Aorta (tissue), 5 donors: ENCODE measurements at regions of chr22 and their contacts with region 1.

Region 1: GRCh38 chr22:41517172-41518047 is 26.9 kb downstream of the POLR3H start:
- DNase-seq: peak in 1 of 2 donors; percentile 89
- ATAC-seq: peak; percentile 78
- H3K4me3 ChIP-seq: no peak overlapping the region
- H3K27ac ChIP-seq: no peak overlapping the region
- H3K4me1 ChIP-seq: no peaks in the 10 kb centered on the region
- H3K27me3 ChIP-seq: no peaks in the 10 kb centered on the region

Region 2: DNA sequence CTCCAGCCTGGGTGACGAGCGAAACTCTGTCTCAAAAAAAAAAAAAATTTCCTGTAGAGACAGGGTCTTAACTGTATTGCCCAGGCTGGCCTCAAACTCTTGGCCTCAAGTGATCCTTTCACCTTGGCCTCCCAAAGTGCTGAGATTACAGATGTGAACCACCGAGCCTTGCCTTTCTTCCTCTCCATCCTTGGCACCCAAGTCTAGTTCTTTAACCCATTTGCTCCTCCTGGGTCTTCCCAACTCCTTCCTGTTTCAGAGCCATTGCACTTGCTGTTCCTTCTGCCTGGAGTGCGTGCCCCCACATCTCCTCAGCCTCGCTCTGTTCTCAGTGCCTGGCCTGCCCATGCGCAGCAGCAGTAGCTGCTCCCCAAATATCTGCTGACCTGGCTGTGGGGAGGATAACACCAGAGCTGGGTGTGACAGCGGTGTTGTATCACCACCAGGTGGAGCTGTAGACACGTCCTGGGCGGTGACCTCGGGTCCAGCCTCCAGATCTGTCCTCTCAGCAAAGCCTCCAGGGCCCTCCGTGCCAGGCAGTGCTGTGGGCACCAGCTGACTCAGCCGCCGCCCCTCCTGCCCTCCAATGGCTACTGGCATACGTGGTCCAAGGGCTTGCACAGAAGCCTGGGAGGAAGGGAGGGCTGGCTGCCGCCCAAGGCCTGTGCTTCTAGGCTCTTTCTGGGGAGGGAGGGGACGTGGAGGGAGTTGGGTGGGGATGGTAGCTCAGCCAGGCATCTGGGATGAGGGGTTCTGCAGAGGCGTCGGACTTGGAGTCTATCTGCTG is 113.7 kb before region 1 on chr22:
- intact Hi-C with region 1: loop called (anchors 1 to 2 kb)
- DNase-seq: peak; percentile 97
- ATAC-seq: peak; percentile 96
- H3K4me3 ChIP-seq: no peak overlapping the region
- H3K27ac ChIP-seq: peak overlapping the region in 1 of 2 donors; percentile 30
- H3K4me1 ChIP-seq: no peaks in the 10 kb centered on the region
- H3K27me3 ChIP-seq: no peaks in the 10 kb centered on the region

Region 3: DNA sequence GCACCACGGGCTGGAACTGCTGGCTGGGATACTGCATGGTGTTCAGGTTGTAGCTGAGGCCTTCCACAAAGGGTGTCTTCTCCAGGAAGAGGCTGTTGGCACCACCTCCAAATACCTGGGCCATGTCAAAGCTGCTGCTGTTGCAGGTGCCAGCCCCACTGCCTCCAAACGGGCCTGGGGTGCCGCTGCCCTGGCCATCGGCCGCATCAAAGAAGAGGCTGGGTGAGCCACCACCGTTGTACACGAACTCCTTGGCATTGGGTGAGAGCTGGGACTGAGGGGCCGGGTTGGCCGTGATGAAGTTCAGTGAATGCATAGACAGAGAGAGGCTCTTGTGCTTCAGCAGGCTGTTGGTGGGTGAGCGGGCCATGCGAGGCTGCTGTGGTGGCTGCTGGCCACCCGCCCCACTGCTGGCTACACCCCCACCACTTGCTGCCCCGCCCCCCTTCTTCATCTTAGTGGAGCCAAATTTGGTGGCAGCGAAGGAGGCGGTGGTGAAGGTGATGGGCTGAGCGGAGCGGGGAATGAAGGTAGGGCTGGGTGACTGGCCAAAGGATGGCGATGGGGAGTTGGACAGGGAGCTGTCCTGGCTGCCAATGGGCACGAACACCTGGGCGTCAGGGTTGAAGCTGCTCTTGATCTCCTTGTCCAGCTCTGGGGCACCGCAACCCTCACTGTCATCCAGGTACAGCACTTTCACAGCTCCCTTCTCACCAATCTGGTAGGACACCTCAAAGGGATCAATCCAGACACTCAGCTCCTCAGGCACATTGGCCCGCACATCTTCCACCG is 80.9 kb before region 1 on chr22:
- intact Hi-C with region 1: no loop called
- DNase-seq: no peak
- ATAC-seq: no peak
- H3K4me3 ChIP-seq: no peak overlapping the region
- H3K27ac ChIP-seq: no peak overlapping the region
- H3K4me1 ChIP-seq: no peaks in the 10 kb centered on the region
- H3K27me3 ChIP-seq: no peaks in the 10 kb centered on the region

Region 4: DNA sequence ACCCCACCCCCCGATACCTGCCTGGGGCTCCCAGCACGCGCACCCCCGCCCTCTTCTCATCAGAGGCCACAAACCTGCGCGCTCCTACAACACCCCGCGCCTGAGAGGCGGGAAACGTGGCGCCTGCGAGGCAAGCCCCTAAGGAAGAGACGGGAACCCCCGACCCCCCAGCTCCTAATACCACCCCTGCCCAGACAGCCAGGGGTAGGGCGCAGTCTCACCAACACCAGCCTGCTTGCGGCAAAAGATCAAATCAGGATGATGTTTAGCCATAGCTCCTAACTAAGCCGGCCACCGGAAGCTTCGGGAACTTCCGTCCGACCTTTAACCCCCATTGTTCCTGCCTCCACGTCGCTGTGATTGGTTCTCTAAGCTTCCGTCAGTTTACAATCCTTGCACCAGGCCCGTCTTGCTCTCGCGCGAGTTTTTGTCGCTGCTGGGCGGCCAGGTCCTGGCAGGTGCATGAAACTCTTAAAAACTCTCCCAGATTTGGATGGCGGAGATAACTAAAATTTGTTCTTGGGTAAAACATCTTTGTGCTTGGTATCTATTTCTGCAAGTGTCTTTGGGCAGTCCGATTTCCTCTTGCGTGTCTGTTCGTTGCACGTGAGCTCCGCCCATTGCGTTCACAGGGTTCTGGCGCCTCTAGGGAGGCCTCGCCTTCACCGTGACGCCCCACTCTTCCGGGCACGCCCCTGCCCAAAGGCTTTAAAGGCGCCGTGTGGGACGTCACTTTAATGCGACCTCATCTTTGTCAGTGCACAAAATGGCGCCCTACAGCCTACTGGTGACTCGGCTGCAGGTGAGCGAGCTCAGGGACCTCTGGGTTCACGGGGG is 48.8 kb before region 1 on chr22 and contains the starts of genes ACO2 and PHF5A:
- intact Hi-C with region 1: loop called (anchors 5 to 10 kb)
- DNase-seq: peak; percentile 98 to 99
- ATAC-seq: peak; percentile 100
- H3K4me3 ChIP-seq: peak within 1 kb of the TSS; percentile 35 to 73
- H3K27ac ChIP-seq: peak within 1 kb of the TSS; percentile 56 to 74
- H3K4me1 ChIP-seq: peaks cover 0 to 4% of the 10 kb centered on the region in 2 donors
- H3K27me3 ChIP-seq: no peaks in the 10 kb centered on the region
- total RNA-seq, gene ACO2: 53.7 to 60.7 TPM
- total RNA-seq, gene PHF5A: 22.5 to 27.0 TPM

Region 5: DNA sequence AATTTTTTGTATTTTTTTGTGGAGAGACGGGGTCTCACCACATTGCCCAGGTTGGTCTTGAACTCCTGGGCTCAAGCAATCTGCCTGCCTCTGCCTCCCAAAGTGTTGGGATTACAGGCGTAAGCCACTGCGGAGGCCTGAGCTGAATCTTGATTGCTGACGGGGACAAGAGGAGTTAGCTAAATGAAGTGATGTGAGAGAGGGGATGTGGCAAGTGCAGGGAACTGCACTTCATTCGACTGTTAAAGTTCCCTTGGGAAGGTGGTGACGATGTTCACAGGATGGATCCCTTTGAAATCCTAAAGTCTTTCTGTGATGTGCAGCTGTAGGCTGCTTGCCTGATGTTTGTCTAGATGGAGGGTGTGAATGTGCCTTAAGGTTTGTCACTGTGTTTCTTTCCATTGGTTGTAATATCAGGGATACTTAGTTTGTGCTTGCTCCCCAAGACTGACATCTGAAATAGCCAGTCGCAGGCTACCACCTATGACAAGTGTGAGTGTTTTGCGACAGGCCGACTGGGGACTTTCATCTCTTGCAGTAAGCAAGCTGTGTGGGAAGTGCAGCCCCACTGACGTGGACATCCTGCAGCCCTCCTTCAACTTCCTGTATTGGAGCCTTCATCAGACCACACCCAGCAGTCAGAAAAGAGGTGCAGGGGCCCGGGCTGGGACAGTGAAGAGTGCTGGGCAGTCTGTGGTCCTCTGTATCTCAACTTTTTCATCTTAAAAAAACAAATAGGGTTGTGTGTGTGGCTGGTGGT is 263.5 kb after region 1 on chr22:
- intact Hi-C with region 1: no loop called
- DNase-seq: peak; percentile 73 to 81
- ATAC-seq: peak; percentile 44
- H3K4me3 ChIP-seq: no peak overlapping the region
- H3K27ac ChIP-seq: no peak overlapping the region
- H3K4me1 ChIP-seq: no peaks in the 10 kb centered on the region
- H3K27me3 ChIP-seq: no peaks in the 10 kb centered on the region